HEK293 (cell line): ENCODE measurements at regions of chr10 and their contacts with region 1.

Region 1: DNA sequence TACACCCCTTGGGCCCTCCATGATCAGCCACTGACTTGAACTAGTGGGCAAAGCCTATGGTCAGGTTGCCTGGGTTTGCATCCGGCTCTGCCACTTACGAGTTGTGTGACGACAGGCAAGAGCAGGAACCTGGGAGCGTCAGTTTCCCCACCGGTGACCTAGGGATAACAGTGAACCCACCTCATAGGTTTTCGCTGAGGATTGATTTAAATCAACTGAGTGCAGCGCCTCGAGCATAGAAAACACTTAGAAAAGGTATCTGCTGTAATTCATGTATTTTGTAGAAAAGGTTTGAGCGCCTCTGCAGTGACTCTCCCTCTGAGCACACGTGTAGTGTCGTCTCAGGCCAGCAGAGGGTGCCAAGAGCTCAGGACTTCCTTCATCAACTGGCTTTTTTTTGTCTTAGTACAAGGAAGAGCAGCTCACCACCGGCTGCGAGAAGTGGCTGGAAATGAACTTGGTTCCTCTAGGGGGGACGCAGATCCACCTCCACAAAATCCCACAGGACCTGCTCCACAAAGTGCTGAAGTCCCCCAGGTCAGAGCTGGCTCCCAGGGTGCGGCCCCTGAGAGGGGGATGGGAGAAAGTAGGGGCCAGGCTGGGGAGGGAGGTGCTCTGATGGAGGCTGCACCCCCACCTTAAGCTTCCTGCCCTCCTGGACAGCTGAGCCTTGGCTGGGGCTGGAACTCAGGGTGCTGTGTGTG is 27.7 kb downstream of the BTBD16 start:
- H3K4me3 ChIP-seq: no peak overlapping the region
- H3K27ac ChIP-seq: no peak overlapping the region; the same call in 1 of the 2 replicates
- H3K4me1 ChIP-seq: no peaks in the 10 kb centered on the region
- CTCF ChIP-seq: peak; percentile 75

Region 2: GRCh38 chr10:122252805-122253204 is 45.9 kb before region 1 on chr10:
- CTCF ChIA-PET with region 1: no interaction called
- POLR2A ChIA-PET with region 1: no interaction called
- H3K4me3 ChIP-seq: no peak overlapping the region
- H3K27ac ChIP-seq: no peak overlapping the region
- H3K4me1 ChIP-seq: no peaks in the 10 kb centered on the region
- CTCF ChIP-seq: no peak

Region 3: GRCh38 chr10:122279725-122280141 is 19.0 kb before region 1 on chr10:
- CTCF ChIA-PET with region 1: interaction called, 31 read pairs
- POLR2A ChIA-PET with region 1: no interaction called
- H3K4me3 ChIP-seq: no peak overlapping the region
- H3K27ac ChIP-seq: no peak overlapping the region
- H3K4me1 ChIP-seq: no peaks in the 10 kb centered on the region
- CTCF ChIP-seq: peak; percentile 73

Region 4: DNA sequence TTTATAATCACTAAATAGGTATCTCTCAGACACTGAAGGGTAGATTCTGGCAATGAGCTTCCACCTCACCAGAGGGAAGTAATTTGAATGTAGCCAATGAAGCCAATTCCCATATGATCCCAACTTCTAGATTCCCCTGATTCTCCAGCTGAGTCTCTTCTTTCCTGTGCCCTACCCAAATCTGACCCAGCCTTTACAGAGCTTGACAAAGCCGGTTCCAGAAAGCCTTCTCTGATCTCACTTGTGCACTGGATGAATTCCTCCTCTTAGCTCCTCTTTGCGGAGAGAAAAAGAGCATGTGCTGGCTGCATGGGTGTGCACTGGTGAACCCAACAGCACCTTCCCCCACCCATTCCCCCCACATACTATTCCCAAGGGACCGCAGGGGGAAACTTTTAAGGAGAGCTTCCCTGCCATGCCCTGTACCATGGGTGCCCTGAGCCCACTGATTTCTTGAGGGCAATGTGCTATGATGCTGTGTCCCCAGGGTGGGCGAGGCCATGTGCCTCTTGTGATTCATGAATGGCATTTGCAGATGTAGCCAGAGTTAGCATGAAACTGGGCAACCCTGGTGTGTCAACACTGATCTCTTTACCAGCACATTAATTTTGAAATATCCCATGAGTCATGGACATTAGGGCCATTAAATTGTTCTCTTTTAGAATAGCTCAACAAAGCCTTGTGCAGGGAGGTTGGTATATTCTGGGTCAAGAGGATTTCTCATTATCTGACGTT is 25.4 kb after region 1 on chr10:
- CTCF ChIA-PET with region 1: interaction called, 14 read pairs
- POLR2A ChIA-PET with region 1: no interaction called
- H3K4me3 ChIP-seq: no peak overlapping the region
- H3K27ac ChIP-seq: no peak overlapping the region
- H3K4me1 ChIP-seq: no peaks in the 10 kb centered on the region
- CTCF ChIP-seq: no peak

Region 5: DNA sequence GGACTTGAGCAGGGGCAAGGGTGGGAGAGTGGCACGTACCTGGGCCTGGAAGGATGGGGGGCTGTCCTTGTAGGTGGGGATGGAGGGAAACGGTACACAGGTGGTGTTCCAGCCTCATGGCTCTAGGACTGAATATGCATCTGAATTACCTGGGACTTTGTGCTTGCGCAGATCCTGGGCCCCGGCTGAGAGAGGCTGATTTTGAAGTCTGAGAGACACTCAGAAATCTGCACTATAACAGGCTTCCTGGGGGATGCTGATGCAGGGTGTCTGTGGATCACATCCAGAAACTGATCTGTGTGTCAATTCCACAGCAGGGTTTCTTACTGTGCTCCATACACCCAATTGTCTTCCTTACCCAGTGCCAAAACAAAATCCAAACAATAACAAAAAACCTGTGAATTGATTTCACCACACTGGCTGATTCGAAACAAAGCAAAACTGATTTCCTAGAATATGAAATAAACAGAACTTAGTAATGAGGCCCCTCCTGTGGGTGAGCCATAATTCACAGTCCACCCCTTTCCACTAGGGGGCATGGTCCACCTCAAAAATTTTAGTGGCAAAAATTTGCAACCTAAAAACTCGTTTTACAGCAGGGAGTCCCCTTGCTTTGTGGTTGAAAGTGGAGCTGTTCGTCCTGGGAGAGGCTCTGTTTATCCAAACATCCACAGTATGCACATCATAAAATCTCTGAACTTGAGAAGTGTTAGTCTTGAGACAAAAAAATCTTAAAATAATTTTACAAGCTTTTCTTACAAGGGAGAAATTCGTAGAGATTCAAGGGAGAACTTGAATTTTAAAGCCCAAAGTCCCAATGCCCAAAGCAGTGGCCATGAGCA is 43.8 kb after region 1 on chr10:
- CTCF ChIA-PET with region 1: interaction called, 16 read pairs
- POLR2A ChIA-PET with region 1: no interaction called
- H3K4me3 ChIP-seq: no peak overlapping the region
- H3K27ac ChIP-seq: no peak overlapping the region
- H3K4me1 ChIP-seq: no peaks in the 10 kb centered on the region
- CTCF ChIP-seq: peak; percentile 47; the same call in 1 of the 2 replicates